B cell (primary cell): ENCODE measurements at regions of chr20 and their contacts with region 1.

Region 1: GRCh38 chr20:17898548-17898994 is 70.0 kb downstream of the SNX5 start:
- DNase-seq: peak; percentile 78
- ATAC-seq: peak; percentile 80
- H3K4me3 ChIP-seq: no peak overlapping the region
- H3K4me3 Mint-ChIP-seq: no peak overlapping the region
- H3K27ac ChIP-seq: no peak overlapping the region
- H3K27ac Mint-ChIP-seq: peak overlapping the region; percentile 0
- H3K4me1 ChIP-seq: peaks cover 47 to 48% of the 10 kb centered on the region in 2 donors
- H3K4me1 Mint-ChIP-seq: peaks cover 46% of the 10 kb centered on the region
- H3K27me3 ChIP-seq: peaks cover 0 to 4% (median 2%) of the 10 kb centered on the region in 4 experiments
- H3K27me3 Mint-ChIP-seq: peaks cover 21% of the 10 kb centered on the region
- CTCF ChIP-seq: peak; percentile 98

Region 2: GRCh38 chr20:17648791-17649730 is 249.5 kb before region 1 on chr20:
- CTCF ChIA-PET with region 1: interaction called, 10 read pairs
- POLR2A ChIA-PET with region 1: no interaction called
- intact Hi-C with region 1: no loop called
- DNase-seq: peak; percentile 61
- ATAC-seq: peak; percentile 81
- H3K4me3 ChIP-seq: peak overlapping the region in 1 of 5 experiments; percentile 6
- H3K4me3 Mint-ChIP-seq: peak overlapping the region; percentile 4
- H3K27ac ChIP-seq: no peak overlapping the region
- H3K27ac Mint-ChIP-seq: no peak overlapping the region
- H3K4me1 ChIP-seq: peaks cover 8 to 18% of the 10 kb centered on the region in 2 donors
- H3K4me1 Mint-ChIP-seq: peaks cover 22% of the 10 kb centered on the region
- H3K27me3 ChIP-seq: no peaks in the 10 kb centered on the region
- H3K27me3 Mint-ChIP-seq: no peaks in the 10 kb centered on the region
- CTCF ChIP-seq: peak; percentile 46

Region 3: DNA sequence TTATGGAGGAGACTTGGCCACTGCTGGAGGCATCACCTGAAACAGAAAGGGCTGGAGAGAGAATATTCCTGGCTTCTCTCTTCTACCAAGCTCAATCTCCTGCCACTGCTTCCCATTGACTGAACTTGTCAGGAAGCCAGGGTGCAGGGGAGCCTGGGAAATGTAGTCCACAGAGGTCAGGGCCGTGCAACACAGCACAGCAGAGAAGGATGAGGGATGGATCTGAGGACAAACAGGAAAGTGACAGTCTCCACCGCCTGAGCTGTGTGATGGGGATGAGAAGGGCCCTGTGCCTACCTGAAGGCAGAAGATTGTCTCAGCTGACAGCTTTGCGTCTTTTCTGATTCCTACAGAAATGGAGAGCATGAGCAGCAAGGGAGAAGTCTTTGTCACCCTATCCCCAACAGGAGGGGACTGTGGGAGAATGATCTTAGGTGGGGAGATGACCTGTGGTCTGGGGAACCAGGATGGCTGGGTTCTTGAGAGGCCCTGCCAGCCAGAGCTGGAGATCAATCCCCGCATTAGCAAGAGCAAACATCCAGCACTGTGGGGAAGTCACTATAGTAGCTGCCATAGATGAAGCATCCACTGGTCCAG is 44.2 kb before region 1 on chr20:
- CTCF ChIA-PET with region 1: interaction called, 16 read pairs
- POLR2A ChIA-PET with region 1: interaction called, 3 read pairs
- intact Hi-C with region 1: loop called (anchors 5 kb)
- DNase-seq: no peak
- ATAC-seq: no peak
- H3K4me3 ChIP-seq: no peak overlapping the region
- H3K4me3 Mint-ChIP-seq: no peak overlapping the region
- H3K27ac ChIP-seq: no peak overlapping the region
- H3K27ac Mint-ChIP-seq: peak overlapping the region; percentile 18
- H3K4me1 ChIP-seq: peaks cover 50 to 63% of the 10 kb centered on the region in 2 donors
- H3K4me1 Mint-ChIP-seq: peaks cover 67% of the 10 kb centered on the region
- H3K27me3 ChIP-seq: no peaks in the 10 kb centered on the region
- H3K27me3 Mint-ChIP-seq: no peaks in the 10 kb centered on the region
- CTCF ChIP-seq: no peak

Region 4: GRCh38 chr20:17938871-17939619 is 40.5 kb after region 1 on chr20:
- CTCF ChIA-PET with region 1: interaction called, 10 read pairs
- POLR2A ChIA-PET with region 1: no interaction called
- intact Hi-C with region 1: loop called (anchors 1 kb)
- DNase-seq: peak; percentile 79
- ATAC-seq: peak; percentile 89
- H3K4me3 ChIP-seq: no peak overlapping the region
- H3K4me3 Mint-ChIP-seq: peak overlapping the region; percentile 54
- H3K27ac ChIP-seq: peak overlapping the region in 1 of 2 donors; percentile 55
- H3K27ac Mint-ChIP-seq: peak overlapping the region; percentile 56
- H3K4me1 ChIP-seq: peaks cover 24 to 26% of the 10 kb centered on the region in 2 donors
- H3K4me1 Mint-ChIP-seq: peaks cover 36% of the 10 kb centered on the region
- H3K27me3 ChIP-seq: no peaks in the 10 kb centered on the region
- H3K27me3 Mint-ChIP-seq: no peaks in the 10 kb centered on the region
- CTCF ChIP-seq: peak; percentile 88

Region 5: DNA sequence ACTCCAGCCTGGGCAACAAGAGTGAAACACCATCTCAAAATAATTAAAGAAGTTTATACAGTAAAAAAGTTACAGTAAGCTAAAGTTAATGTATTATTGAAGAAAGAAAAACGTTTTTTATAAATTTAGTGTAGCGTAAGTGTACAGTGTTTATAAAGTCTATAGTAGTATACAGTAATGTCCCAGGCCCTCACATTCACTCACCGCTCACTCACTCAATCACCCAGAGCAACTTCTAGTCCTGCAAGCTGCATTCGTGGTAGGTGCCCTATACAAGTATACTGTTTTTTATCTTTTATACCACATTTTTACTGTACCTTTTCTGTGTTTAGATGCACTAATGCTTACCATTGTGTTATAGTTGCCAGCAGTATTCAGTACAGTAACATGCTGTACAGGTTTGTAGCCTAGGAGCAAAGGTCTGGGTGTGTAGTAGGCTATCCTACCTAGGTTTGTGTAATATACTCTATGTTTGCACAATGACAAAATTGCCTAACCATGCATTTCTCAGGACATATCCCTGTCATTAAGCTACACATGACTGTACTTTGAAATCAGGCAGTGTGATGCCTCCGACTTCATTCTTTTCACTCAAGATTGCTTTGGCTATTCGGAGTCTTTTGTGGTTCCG is 86.9 kb after region 1 on chr20:
- CTCF ChIA-PET with region 1: no interaction called
- POLR2A ChIA-PET with region 1: no interaction called
- intact Hi-C with region 1: no loop called
- DNase-seq: no peak
- ATAC-seq: no peak
- H3K4me3 ChIP-seq: no peak overlapping the region
- H3K4me3 Mint-ChIP-seq: no peak overlapping the region
- H3K27ac ChIP-seq: no peak overlapping the region
- H3K27ac Mint-ChIP-seq: no peak overlapping the region
- H3K4me1 ChIP-seq: no peaks in the 10 kb centered on the region
- H3K4me1 Mint-ChIP-seq: peaks cover 16% of the 10 kb centered on the region
- H3K27me3 ChIP-seq: no peaks in the 10 kb centered on the region
- H3K27me3 Mint-ChIP-seq: no peaks in the 10 kb centered on the region
- CTCF ChIP-seq: no peak

Region 6: GRCh38 chr20:18019070-18019469 is 120.5 kb after region 1 on chr20:
- CTCF ChIA-PET with region 1: no interaction called
- POLR2A ChIA-PET with region 1: no interaction called
- intact Hi-C with region 1: loop called (anchors 1 kb)
- DNase-seq: peak; percentile 47
- ATAC-seq: peak; percentile 80
- H3K4me3 ChIP-seq: no peak overlapping the region
- H3K4me3 Mint-ChIP-seq: no peak overlapping the region
- H3K27ac ChIP-seq: no peak overlapping the region
- H3K27ac Mint-ChIP-seq: no peak overlapping the region
- H3K4me1 ChIP-seq: no peaks in the 10 kb centered on the region
- H3K4me1 Mint-ChIP-seq: peaks cover 3% of the 10 kb centered on the region
- H3K27me3 ChIP-seq: peaks cover 0 to 2% (median 0%) of the 10 kb centered on the region in 4 experiments
- H3K27me3 Mint-ChIP-seq: no peaks in the 10 kb centered on the region
- CTCF ChIP-seq: peak; percentile 68